Activated CD4-positive, alpha-beta T cell treated with anti-CD3 and anti-CD28 coated beads for 36 hours (primary cell): ENCODE measurements at regions of chr19 and their contacts with region 1.

Region 1: DNA sequence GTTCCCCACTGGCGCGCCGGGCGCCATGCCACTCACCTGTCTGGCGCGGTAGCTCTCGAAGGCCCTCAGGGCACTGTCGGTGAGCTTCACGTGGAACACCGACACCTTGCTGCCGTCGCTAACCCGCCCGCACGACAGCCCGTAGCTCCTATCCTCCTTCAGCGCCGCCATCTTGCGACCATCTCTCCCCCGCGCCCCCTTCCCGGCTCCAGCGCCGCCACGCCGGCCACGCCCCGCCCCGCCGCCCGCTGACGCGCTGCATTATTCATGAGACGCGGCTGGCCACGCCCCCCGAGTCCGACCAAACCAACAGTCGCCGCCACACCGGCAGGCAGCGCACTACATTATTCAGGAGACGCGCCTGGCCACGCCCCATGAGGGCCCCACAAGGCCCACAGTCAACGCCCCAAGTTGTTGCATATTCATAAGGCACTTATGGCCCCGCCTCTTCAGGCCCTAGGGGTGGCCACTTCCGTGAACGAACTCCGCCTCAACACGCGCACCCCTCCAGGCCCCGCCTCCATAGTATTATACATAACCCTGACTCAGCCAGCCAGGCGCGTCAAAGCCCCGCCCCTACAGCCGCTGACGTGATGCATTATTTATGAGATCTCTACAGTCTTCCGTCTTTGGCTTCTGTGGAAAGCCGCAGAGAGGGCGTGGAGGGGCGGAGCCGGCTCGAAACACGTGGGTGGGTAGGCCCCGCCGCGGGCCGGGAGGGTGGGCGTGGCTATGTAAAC is at the start of gene ELL:
- DNase-seq: peak; percentile 100
- ATAC-seq: peak; percentile 92
- H3K4me3 Mint-ChIP-seq: peak within 1 kb of the TSS; percentile 80
- H3K27ac Mint-ChIP-seq: peak within 1 kb of the TSS; percentile 93
- H3K4me1 Mint-ChIP-seq: peaks cover 14% of the 10 kb centered on the region
- H3K27me3 Mint-ChIP-seq: no peaks in the 10 kb centered on the region
- total RNA-seq, gene ELL: 20.2 to 21.4 TPM

Region 2: GRCh38 chr19:18281082-18282020 is 240.7 kb before region 1 on chr19 and contains the start of gene JUND:
- CTCF ChIA-PET with region 1: no interaction called
- POLR2A ChIA-PET with region 1: no interaction called
- intact Hi-C with region 1: loop called in 1 of 2 experiments (anchors 1 kb)
- DNase-seq: peak; percentile 98
- ATAC-seq: peak; percentile 69
- H3K4me3 Mint-ChIP-seq: peak within 1 kb of the TSS; percentile 86
- H3K27ac Mint-ChIP-seq: peak within 1 kb of the TSS; percentile 98
- H3K4me1 Mint-ChIP-seq: peaks cover 54% of the 10 kb centered on the region
- H3K27me3 Mint-ChIP-seq: no peaks in the 10 kb centered on the region
- total RNA-seq, gene JUND: 254 to 311 TPM

Region 3: DNA sequence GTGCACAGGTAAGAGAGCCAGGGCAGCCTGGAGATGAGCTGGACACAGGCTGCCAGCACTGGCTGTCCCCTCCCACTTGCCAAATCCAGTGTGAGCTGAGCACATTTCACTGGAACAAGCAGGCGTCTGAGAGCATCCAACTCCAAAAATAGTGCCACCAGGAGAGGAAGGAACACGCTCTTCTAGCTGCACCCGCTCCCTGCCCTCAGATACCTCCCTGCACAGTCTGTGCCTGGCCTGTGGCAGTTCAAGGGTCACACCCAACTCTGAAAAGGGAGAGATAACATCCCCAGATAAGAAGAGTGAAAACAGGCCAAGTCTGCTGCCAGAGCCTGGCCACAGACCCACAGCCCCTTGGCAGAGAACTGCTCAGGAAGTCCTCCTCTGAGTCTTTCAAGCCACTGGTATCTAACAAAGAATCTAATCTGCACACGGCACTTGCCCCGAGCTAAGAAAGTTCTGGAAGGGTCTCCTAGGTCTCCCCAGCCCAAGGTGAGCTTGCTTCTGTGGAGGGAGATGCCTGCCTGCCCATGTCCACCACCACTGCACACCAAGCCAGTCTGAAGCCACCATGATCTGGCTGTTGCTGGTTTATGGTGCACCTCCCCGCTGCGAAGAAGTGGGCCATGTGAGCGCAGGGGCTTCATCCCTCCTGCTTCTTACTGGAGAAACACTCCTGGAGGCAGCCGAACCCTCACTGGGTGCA is 14.9 kb before region 1 on chr19:
- CTCF ChIA-PET with region 1: interaction called, 25 read pairs
- POLR2A ChIA-PET with region 1: interaction called, 5 read pairs
- intact Hi-C with region 1: no loop called
- DNase-seq: peak; percentile 31
- ATAC-seq: peak; percentile 23
- H3K4me3 Mint-ChIP-seq: no peak overlapping the region
- H3K27ac Mint-ChIP-seq: peak overlapping the region; percentile 83
- H3K4me1 Mint-ChIP-seq: peaks cover 69% of the 10 kb centered on the region
- H3K27me3 Mint-ChIP-seq: no peaks in the 10 kb centered on the region

Region 4: GRCh38 chr19:18588611-18589379 is 66.7 kb after region 1 on chr19 and contains the start of gene REX1BD:
- CTCF ChIA-PET with region 1: interaction called, 13 read pairs
- POLR2A ChIA-PET with region 1: interaction called, 4 read pairs
- intact Hi-C with region 1: loop called (anchors 1 kb)
- DNase-seq: peak; percentile 91
- ATAC-seq: peak; percentile 81
- H3K4me3 Mint-ChIP-seq: peak within 1 kb of the TSS; percentile 90
- H3K27ac Mint-ChIP-seq: peak within 1 kb of the TSS; percentile 92
- H3K4me1 Mint-ChIP-seq: peaks cover 31% of the 10 kb centered on the region
- H3K27me3 Mint-ChIP-seq: no peaks in the 10 kb centered on the region
- total RNA-seq, gene REX1BD: 47.8 to 81.3 TPM

Region 5: GRCh38 chr19:18785179-18786128 is 263.4 kb after region 1 on chr19:
- CTCF ChIA-PET with region 1: no interaction called
- POLR2A ChIA-PET with region 1: no interaction called
- intact Hi-C with region 1: loop called in 1 of 2 experiments (anchors 1 kb)
- DNase-seq: peak; percentile 90
- ATAC-seq: peak; percentile 88
- H3K4me3 Mint-ChIP-seq: no peak overlapping the region
- H3K27ac Mint-ChIP-seq: no peak overlapping the region
- H3K4me1 Mint-ChIP-seq: peaks cover 31% of the 10 kb centered on the region
- H3K27me3 Mint-ChIP-seq: peaks cover 46% of the 10 kb centered on the region

Region 6: GRCh38 chr19:19033426-19034203 is 511.6 kb after region 1 on chr19 and contains the starts of genes ARMC6 and SUGP2:
- CTCF ChIA-PET with region 1: no interaction called
- POLR2A ChIA-PET with region 1: no interaction called
- intact Hi-C with region 1: loop called in 1 of 2 experiments (anchors 1 kb)
- DNase-seq: peak; percentile 92
- ATAC-seq: peak; percentile 78
- H3K4me3 Mint-ChIP-seq: peak within 1 kb of the TSS; percentile 98
- H3K27ac Mint-ChIP-seq: peak within 1 kb of the TSS; percentile 96
- H3K4me1 Mint-ChIP-seq: peaks cover 31% of the 10 kb centered on the region
- H3K27me3 Mint-ChIP-seq: no peaks in the 10 kb centered on the region
- total RNA-seq, gene ARMC6: 33.0 to 40.8 TPM
- total RNA-seq, gene SUGP2: 89.8 to 104 TPM